Posterior vena cava (tissue), 2 donors: ENCODE measurements at regions of chr4 and their contacts with region 1.

Region 1: GRCh38 chr4:57080781-57081650 is 29.2 kb downstream of the IGFBP7 start:
- DNase-seq: no peak

Region 2: GRCh38 chr4:56914336-56914735 is 166.7 kb before region 1 on chr4:
- intact Hi-C with region 1: loop called in 1 of 2 experiments (anchors 2 kb)
- DNase-seq: no peak

Region 3: DNA sequence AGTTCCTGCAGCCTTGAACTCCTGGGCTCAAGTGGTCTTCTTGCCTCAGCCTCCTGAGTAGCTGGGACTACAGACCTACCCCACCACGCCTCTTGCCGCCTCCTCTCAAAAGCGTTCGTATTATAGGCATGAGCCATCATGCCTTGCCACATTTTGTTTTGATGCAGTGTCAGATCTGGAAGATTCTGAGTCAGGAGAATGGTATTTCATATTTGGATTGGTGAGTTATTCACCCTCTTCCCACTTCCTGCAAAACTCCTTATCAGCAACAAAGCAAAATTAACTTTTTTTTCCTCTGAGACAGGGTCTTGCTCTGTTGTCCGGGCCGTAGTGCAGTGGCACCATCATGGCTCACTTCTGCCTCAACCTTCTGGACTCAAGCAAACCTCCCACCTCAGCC is 143.8 kb before region 1 on chr4:
- intact Hi-C with region 1: no loop called
- DNase-seq: no peak

Region 4: GRCh38 chr4:57043347-57044251 is 37.4 kb before region 1 on chr4:
- intact Hi-C with region 1: loop called in 1 of 2 experiments (anchors 5 kb)
- DNase-seq: no peak

Region 5: DNA sequence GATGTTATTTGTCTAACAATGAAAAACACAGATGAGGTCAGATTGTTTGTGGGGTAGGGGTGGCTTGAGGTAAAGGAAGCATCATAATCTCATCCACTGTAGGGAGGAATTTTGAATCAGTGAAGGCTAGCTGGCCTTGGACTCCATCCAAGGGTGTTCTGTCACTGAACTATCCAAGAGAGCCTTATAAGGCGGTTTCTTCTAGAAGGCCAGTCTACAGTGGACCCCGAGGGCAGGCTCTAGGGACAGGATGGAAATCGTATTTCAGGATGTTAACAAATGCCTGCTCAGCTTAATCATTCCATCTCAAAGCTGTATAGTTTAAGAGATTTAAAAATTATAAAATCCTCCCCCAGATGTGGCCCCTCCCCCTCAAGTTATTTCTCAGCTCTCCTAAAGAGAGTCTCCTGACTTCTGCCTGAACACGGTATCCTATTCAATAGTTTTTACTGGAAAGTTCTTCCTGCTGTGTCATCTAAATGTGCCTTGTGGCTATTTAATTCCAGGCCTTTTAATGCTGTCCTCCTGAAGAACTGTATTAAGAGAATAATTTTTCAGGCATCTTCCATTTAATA is 21.1 kb after region 1 on chr4:
- intact Hi-C with region 1: loop called in 1 of 2 experiments (anchors 2 kb)
- DNase-seq: no peak

Region 6: GRCh38 chr4:57220172-57220571 is 139.2 kb after region 1 on chr4:
- intact Hi-C with region 1: no loop called
- DNase-seq: no peak